Right ventricle myocardium inferior (tissue), 1 donor: ENCODE measurements at regions of chr6 and their contacts with region 1.

Region 1: DNA sequence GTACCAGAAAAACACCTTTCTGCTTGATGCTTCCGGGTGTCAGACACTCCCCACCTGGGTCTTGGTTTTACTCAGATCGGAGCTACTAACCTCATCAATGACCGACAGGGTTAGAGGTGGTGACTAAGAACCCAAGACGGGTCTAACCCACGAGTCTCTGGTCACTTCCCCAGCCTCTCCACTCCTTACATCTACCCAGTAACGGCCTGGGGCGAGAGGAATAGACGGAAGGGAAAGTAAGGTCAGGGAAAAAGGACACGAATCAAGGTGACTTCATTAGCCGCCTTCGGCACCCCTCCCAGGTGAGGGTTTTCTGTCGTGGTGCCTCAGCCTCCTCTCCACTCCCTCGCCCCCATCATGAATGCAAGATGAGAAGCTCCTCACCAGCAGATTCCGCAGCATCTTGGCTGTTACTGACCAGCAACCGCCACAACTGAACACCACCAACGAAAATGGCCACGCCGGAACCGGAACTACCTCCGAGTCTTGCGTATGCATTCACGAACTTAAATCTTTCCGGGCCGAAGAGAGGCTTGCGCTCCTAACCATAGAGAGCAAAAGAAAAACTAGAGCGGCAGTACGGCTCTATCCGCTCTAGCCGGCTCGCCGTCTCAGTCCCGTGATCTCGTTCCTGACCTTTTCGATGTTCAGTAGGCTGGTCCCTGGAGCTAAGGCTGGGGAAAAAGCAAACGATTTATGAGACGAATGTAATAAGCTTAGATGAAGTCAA is at the start of gene COX7A2:
- DNase-seq: peak; percentile 93
- ATAC-seq: peak; percentile 98
- total RNA-seq, gene COX7A2: 969 TPM

Region 2: GRCh38 chr6:73653571-73654424 is 1589.7 kb before region 1 on chr6 and contains the start of gene SLC17A5:
- intact Hi-C with region 1: loop called (anchors 10 kb)
- DNase-seq: peak; percentile 96
- ATAC-seq: peak; percentile 99
- total RNA-seq, gene SLC17A5: 5.9 TPM

Region 3: DNA sequence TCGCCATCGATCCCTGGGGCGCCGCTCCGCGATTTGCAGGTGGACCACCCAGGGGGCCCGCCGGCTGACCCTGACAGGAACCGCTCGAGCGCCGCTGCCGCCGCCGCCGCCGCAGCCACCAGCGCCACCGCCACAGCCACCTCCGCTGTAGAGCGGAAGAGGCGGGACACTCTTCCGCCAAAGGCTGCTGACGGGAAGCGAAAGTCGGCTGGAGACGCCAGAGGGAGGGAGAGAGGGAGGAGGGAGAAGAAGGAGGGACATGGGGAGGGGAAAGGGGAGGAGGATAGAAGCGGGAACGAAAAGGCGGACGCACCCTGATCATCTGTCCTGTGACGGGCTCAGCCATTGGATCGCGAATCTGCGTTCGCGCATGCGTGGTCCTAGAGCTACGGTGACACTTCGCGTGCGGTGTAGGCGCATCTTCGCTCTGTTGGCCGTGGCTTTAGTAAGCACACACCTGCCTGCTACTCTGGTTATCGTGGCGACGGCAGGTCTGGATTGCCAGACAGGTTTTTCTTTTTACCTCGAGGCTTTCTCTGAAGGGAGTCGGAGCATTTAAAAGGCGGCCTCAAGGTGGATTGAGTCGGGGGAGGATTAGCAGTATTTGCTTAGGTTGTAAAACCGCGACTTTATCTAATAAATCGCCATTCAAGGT is 41.3 kb after region 1 on chr6 and contains the start of gene TMEM30A:
- intact Hi-C with region 1: loop called (anchors 2 kb)
- DNase-seq: peak; percentile 98
- ATAC-seq: peak; percentile 100
- total RNA-seq, gene TMEM30A: 45.2 TPM